ENCODE measurements at regions of chr5 and their contacts with region 1.

Region 1: GRCh38 chr5:97162045-97162444 is 19.6 kb upstream of the LIX1 start:
- DNase-seq: peak in 2 of 4 donors; percentile 65 to 83
- ATAC-seq: peak; percentile 84
- H3K4me3 ChIP-seq: no peak overlapping the region
- H3K27ac ChIP-seq: no peak overlapping the region
- H3K4me1 ChIP-seq: peaks cover 0 to 3% of the 10 kb centered on the region in 2 donors
- H3K27me3 ChIP-seq: no peaks in the 10 kb centered on the region
- CTCF ChIP-seq: peak; percentile 81 to 84

Region 2: DNA sequence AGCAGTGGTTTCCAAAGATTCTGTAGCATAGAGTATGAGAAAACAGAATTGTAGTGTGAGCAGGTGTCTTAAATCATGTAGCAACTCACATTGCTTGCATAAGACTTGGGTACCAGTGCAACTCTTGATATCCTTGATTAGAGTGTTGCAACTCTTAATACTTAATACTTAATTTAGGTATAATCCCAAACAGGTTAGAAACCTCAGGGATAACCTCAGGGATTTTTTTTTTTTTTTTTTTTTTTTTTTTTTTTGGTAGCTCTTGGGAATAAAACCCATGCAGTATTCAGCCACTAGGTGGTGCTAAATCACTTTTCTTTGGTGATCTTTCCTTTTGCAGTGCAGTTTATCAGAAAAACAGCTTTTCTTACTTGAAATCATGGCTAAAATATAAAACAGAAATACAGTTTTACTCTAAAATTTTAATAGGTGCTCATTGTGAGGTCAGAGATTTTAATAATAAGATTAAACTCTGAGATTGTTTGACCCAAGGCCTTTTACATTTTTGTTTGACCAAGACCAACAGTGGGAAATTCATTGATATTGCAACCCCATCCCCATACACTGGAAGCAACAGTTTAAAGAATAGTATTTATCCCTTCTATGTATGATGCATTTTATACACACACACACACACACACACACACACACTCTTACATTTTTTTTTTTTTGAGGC is 409.6 kb before region 1 on chr5:
- intact Hi-C with region 1: loop called in 1 of 2 experiments (anchors 10 kb)
- DNase-seq: peak in 2 of 4 donors; percentile 51 to 76
- ATAC-seq: peak; percentile 67
- H3K4me3 ChIP-seq: no peak overlapping the region
- H3K27ac ChIP-seq: peak overlapping the region in 1 of 2 donors; percentile 45
- H3K4me1 ChIP-seq: peaks cover 0 to 8% of the 10 kb centered on the region in 2 donors
- H3K27me3 ChIP-seq: no peaks in the 10 kb centered on the region
- CTCF ChIP-seq: peak; percentile 66 to 74

Region 3: GRCh38 chr5:96868603-96869371 is 293.3 kb before region 1 on chr5:
- intact Hi-C with region 1: loop called in 1 of 2 experiments (anchors 2 kb)
- DNase-seq: peak in 1 of 4 donors; percentile 56
- ATAC-seq: peak; percentile 98
- H3K4me3 ChIP-seq: no peak overlapping the region
- H3K27ac ChIP-seq: no peak overlapping the region
- H3K4me1 ChIP-seq: no peaks in the 10 kb centered on the region
- H3K27me3 ChIP-seq: no peaks in the 10 kb centered on the region
- CTCF ChIP-seq: peak; percentile 81 to 92

Region 4: DNA sequence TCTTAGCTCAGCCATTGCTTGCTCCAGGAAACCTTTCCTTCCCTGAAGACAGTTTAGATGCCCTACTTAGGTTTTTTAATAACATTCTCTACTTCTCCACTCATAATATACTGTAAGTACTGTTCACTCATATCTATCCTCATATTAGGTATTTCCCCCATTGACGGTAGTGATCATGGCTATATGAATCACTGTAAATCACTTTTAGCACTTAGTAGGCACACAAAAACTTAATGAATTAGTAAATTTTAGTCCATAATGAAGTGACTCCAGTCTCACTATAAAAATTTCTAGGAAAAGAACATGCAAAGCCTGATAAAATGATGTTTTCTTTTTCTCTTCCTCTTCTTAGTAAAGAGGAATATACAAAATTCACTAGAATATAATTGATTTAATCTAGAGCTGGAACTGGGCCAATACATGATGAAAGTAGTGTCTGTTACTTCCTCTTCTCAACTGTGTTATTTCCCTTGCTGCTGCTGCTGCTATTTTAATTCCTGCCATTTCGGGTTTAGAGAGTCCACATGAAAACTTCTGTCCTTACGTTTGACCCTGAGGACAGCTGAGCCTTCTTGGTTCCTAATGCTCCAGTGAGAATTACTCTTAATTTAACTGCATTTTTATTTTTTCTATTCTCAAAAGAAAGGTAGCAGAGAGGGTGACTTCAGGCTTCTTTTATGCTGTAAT is 152.7 kb before region 1 on chr5:
- intact Hi-C with region 1: loop called in 1 of 2 experiments (anchors 10 kb)
- DNase-seq: peak in 2 of 4 donors; percentile 20 to 51
- ATAC-seq: peak; percentile 32
- H3K4me3 ChIP-seq: no peak overlapping the region
- H3K27ac ChIP-seq: peak overlapping the region in 1 of 2 donors; percentile 20
- H3K4me1 ChIP-seq: peaks cover 0 to 15% of the 10 kb centered on the region in 2 donors
- H3K27me3 ChIP-seq: no peaks in the 10 kb centered on the region
- CTCF ChIP-seq: no peak

Measured in left lung (tissue), 14 donors.